ENCODE measurements at regions of chr2 and their contacts with region 1.

Region 1: GRCh38 chr2:38115216-38116032 is 39.5 kb upstream of the CYP1B1 start:
- DNase-seq: peak; percentile 85
- H3K4me3 Mint-ChIP-seq: no peak overlapping the region
- H3K27ac Mint-ChIP-seq: no peak overlapping the region
- H3K4me1 Mint-ChIP-seq: no peaks in the 10 kb centered on the region
- H3K27me3 Mint-ChIP-seq: peaks cover 27% of the 10 kb centered on the region

Region 2: GRCh38 chr2:37878536-37878935 is 236.9 kb before region 1 on chr2:
- CTCF ChIA-PET with region 1: no interaction called
- POLR2A ChIA-PET with region 1: no interaction called
- intact Hi-C with region 1: no loop called
- DNase-seq: no peak
- H3K4me3 Mint-ChIP-seq: no peak overlapping the region
- H3K27ac Mint-ChIP-seq: no peak overlapping the region
- H3K4me1 Mint-ChIP-seq: no peaks in the 10 kb centered on the region
- H3K27me3 Mint-ChIP-seq: peaks cover 16% of the 10 kb centered on the region

Region 3: GRCh38 chr2:37890893-37891495 is 224.4 kb before region 1 on chr2:
- CTCF ChIA-PET with region 1: no interaction called
- POLR2A ChIA-PET with region 1: no interaction called
- intact Hi-C with region 1: loop called (anchors 5 kb)
- DNase-seq: peak; percentile 76
- H3K4me3 Mint-ChIP-seq: no peak overlapping the region
- H3K27ac Mint-ChIP-seq: no peak overlapping the region
- H3K4me1 Mint-ChIP-seq: peaks cover 49% of the 10 kb centered on the region
- H3K27me3 Mint-ChIP-seq: peaks cover 6% of the 10 kb centered on the region

Region 4: DNA sequence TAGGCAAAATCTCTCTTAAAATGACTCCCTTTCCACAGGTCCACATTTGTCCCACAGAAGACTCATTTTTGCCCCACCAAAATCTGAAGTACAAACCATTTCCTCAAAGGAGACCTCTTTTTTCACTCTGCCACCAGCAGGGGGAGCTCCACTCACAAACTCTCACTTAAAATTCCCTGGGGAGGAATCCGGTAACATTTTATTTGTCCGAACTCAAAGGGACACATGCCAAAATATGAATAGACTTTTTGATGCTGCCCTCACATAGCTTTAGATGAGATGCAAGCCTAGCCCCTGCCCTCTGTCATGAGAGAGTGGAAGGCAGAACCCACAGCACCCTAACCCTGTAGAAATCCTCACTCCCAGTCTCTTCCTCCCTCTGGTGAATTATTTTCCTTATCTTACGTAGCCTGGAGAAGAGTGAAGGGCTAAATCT is 133.3 kb before region 1 on chr2:
- CTCF ChIA-PET with region 1: interaction called, 7 read pairs
- POLR2A ChIA-PET with region 1: no interaction called
- intact Hi-C with region 1: loop called (anchors 1 kb)
- DNase-seq: peak; percentile 68
- H3K4me3 Mint-ChIP-seq: no peak overlapping the region
- H3K27ac Mint-ChIP-seq: no peak overlapping the region
- H3K4me1 Mint-ChIP-seq: no peaks in the 10 kb centered on the region
- H3K27me3 Mint-ChIP-seq: peaks cover 2% of the 10 kb centered on the region

Region 5: DNA sequence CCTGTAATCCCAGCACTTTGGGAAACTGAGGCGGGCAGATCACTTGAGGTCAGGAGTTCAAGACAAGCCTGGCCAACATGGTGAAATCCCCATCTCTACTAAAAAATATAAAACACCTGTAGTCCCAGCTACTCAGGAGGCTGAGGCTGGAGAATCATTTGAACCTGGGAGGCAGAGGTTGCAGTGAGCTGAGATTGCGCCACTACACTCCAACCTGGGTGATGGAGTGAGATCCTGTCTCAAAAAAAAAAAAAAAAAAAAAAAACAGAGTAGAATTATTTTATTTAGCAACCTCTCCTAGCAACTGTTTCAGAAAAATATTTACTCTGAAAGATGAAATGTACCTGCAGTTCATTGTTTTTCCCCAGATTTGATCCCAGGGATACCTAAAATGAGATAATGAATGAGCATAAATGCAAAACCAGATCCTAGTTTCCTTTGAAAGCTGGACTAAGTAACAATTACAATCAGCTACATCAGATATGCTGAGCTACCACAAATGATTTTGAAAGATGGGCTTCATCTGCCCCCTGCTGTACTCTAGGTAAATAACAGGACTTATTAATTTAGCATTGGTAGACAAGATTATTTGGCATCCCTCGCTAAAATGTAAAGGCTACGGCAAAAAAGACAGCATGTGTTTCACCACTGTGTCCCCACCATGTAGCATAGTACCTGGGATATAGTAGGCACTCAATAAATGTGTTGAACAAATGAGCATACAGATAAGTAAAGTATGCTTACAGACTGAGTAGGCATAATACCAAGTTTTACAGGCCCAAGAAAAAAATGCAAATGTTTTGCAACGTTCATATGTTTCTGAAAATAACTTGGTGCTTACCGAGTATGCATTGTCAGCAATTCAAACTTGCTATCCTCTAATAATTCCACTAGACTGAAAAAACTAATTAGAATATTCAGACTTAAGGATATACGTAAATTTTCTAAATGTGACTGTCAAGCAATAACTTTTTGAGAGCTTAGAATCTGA is 159.2 kb after region 1 on chr2:
- CTCF ChIA-PET with region 1: interaction called, 13 read pairs
- POLR2A ChIA-PET with region 1: no interaction called
- intact Hi-C with region 1: loop called (anchors 1 kb)
- DNase-seq: peak; percentile 22
- H3K4me3 Mint-ChIP-seq: no peak overlapping the region
- H3K27ac Mint-ChIP-seq: no peak overlapping the region
- H3K4me1 Mint-ChIP-seq: peaks cover 4% of the 10 kb centered on the region
- H3K27me3 Mint-ChIP-seq: peaks cover 1% of the 10 kb centered on the region